ENCODE measurements at regions of chr1 and their contacts with region 1.

Region 1: DNA sequence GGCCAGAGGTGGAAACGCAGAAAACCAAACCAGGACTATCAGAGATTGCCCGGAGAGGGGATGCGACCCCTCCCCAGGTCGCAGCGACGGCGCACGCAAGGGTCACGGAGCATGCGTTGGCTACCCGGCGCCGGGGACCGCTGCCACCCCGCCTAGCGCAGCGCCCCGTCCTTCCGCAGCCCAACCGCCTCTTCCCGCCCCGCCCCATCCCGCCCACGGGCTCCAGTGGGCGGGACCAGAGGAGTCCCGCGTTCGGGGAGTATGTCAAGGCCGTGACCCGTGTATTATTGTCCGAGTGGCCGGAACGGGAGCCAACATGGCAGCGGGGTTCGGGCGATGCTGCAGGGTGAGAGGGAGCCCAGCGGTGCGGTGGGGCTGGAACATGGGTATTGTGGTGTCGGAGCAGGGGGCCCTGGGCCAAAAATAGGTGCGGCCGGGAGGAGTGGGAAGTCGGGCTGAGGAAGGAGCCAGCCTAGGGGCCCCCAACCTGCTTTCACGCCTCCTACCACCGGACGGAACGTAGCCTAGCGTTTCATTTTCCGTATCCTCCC is at the start of gene ACADM:
- DNase-seq: peak; percentile 90 to 96 (median 96)
- ATAC-seq: peak; percentile 100
- H3K4me3 ChIP-seq: peak within 1 kb of the TSS; percentile 83
- H3K27ac ChIP-seq: peak within 1 kb of the TSS; percentile 93
- H3K4me1 ChIP-seq: no peaks in the 10 kb centered on the region
- H3K27me3 ChIP-seq: no peaks in the 10 kb centered on the region
- total RNA-seq, gene ACADM: 171 to 197 (median 184) TPM

Region 2: GRCh38 chr1:75423616-75424015 is 300.9 kb before region 1 on chr1:
- intact Hi-C with region 1: no loop called
- DNase-seq: no peak
- ATAC-seq: no peak
- H3K4me3 ChIP-seq: no peak overlapping the region
- H3K27ac ChIP-seq: no peak overlapping the region
- H3K4me1 ChIP-seq: no peaks in the 10 kb centered on the region
- H3K27me3 ChIP-seq: no peaks in the 10 kb centered on the region

Region 3: GRCh38 chr1:75785983-75786853 is 61.7 kb after region 1 on chr1 and contains the start of gene RABGGTB:
- intact Hi-C with region 1: loop called in 1 of 4 experiments (anchors 5 kb)
- DNase-seq: peak; percentile 95 to 98 (median 97)
- ATAC-seq: peak; percentile 99
- H3K4me3 ChIP-seq: peak within 1 kb of the TSS; percentile 96
- H3K27ac ChIP-seq: peak within 1 kb of the TSS; percentile 96
- H3K4me1 ChIP-seq: peaks cover 2% of the 10 kb centered on the region
- H3K27me3 ChIP-seq: no peaks in the 10 kb centered on the region
- total RNA-seq, gene RABGGTB: 55.4 to 67.2 (median 57.1) TPM